ENCODE measurements at regions of chr18 and their contacts with region 1.

Region 1: GRCh38 chr18:48354746-48355260 is 54.4 kb downstream of the ZBTB7C start:
- DNase-seq: no peak
- H3K4me3 ChIP-seq: no peak overlapping the region
- H3K27ac ChIP-seq: no peak overlapping the region
- H3K4me1 ChIP-seq: peaks cover 21% of the 10 kb centered on the region
- H3K27me3 ChIP-seq: no peaks in the 10 kb centered on the region
- CTCF ChIP-seq: no peak

Region 2: DNA sequence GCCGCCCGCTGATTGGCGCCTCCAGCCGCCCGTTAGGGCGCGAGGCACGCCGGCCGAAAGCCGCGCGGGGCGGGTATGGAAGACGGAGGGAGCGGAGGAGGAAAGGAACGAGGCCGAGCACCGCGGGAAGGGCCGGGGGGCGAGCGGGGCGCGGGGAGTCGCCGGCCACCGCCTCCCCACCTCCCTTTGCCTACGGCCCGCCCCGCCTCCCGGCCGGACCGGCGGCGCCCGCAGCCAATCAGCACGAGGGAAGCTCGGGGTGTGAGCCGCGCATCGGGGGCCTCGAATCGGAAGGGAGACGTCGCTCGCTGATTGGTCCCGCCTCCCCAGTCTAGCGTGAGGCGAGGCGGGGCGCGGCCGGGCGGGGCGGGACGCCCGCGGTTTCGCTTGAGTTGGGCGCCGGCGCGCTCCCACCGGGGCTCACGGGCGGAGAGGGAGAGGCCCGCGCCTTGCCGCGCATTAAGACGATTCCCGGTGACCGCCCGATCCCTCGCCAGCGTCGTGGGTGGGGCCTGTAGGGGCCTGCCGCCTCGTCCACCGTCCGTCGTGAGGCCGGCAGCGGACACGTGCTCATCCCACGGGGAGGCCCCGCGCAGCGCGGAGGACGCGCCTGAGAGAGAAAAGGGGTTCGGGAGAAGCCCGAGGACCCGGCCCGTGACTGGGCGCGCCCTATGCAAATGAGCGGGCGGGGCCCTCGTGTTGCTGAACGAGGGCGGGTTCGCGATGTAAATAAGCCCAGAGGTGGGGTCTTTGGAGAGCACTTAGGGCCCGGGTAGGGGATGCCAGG is 423.7 kb before region 1 on chr18:
- CTCF ChIA-PET with region 1: no interaction called
- POLR2A ChIA-PET with region 1: no interaction called
- intact Hi-C with region 1: no loop called
- DNase-seq: peak; percentile 98
- H3K4me3 ChIP-seq: peak overlapping the region; percentile 96
- H3K27ac ChIP-seq: peak overlapping the region; percentile 95
- H3K4me1 ChIP-seq: peaks cover 8% of the 10 kb centered on the region
- H3K27me3 ChIP-seq: no peaks in the 10 kb centered on the region
- CTCF ChIP-seq: no peak

Region 3: GRCh38 chr18:48300463-48300961 is 54.3 kb before region 1 on chr18:
- CTCF ChIA-PET with region 1: no interaction called
- POLR2A ChIA-PET with region 1: no interaction called
- intact Hi-C with region 1: loop called (anchors 5 kb)
- DNase-seq: peak; percentile 41
- H3K4me3 ChIP-seq: no peak overlapping the region
- H3K27ac ChIP-seq: no peak overlapping the region
- H3K4me1 ChIP-seq: peaks cover 9% of the 10 kb centered on the region
- H3K27me3 ChIP-seq: no peaks in the 10 kb centered on the region
- CTCF ChIP-seq: no peak